Aorta (tissue), 5 donors: ENCODE measurements at regions of chr14 and their contacts with region 1.

Region 1: GRCh38 chr14:52552063-52552988 is at the starts of genes GPR137C and TXNDC16:
- DNase-seq: peak; percentile 100
- ATAC-seq: peak; percentile 99
- H3K4me3 ChIP-seq: peak within 1 kb of the TSS; percentile 58 to 76
- H3K27ac ChIP-seq: peak within 1 kb of the TSS; percentile 30 to 82
- H3K4me1 ChIP-seq: no peaks in the 10 kb centered on the region
- H3K27me3 ChIP-seq: no peaks in the 10 kb centered on the region
- total RNA-seq, gene GPR137C: 0.62 to 1.7 TPM
- total RNA-seq, gene TXNDC16: 10.2 to 10.7 TPM

Region 2: DNA sequence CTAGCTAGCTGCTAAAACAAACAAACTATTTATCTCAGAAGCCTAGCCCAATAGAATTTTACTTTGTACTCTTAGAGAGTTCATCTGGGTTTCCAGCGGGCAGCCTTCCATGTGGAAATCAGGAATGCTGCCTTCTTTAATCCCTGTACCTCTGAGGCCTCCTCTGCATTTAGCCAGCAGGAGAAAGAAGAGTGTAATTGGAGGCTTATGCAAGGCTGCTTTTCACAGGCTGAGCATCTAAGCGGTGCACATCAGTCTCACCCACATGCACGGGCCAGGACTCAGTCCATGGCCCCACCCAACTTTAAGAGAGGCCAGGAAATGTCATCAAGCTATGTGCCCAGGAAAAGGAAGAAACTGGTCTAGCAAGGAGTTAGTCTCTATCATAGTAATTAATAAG is 298.8 kb before region 1 on chr14:
- intact Hi-C with region 1: no loop called
- DNase-seq: no peak
- ATAC-seq: no peak
- H3K4me3 ChIP-seq: no peak overlapping the region
- H3K27ac ChIP-seq: no peak overlapping the region
- H3K4me1 ChIP-seq: no peaks in the 10 kb centered on the region
- H3K27me3 ChIP-seq: no peaks in the 10 kb centered on the region

Region 3: DNA sequence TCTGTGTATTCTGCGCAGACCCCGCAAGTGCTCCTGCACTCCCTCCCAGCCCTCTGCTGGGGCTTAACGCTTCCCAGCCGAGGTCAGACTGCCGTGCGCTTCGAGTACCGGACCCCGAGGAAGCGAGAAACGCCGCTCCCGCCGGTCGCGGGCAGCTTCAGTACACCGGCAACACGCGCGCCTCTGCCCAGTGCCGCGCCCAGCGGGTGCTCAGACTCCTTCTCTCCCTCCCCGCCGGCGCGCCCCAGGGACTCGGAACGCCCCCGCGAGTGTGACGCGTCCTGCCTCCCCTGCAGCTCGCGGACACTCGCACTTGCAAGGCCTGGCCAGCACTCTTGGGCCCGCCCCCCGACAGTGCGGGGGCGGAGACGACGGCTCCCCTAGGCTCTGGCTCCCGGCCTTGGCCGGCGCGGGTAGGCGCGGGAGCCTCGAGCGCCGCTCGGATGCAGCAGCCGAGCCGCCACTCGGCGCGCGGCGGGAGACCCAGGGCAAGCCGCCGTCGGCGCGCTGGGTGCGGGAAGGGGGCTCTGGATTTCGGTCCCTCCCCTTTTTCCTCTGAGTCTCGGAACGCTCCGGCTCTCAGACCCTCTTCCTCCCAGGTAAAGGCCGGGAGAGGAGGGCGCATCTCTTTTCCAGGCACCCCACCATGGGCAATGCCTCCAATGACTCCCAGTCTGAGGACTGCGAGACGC is 238.3 kb before region 1 on chr14 and contains the start of gene PTGER2:
- intact Hi-C with region 1: loop called in 1 of 2 experiments (anchors 10 kb)
- DNase-seq: peak; percentile 93 to 97
- ATAC-seq: peak; percentile 85
- H3K4me3 ChIP-seq: peak within 1 kb of the TSS; percentile 6 to 44
- H3K27ac ChIP-seq: no peak within 1 kb of the TSS
- H3K4me1 ChIP-seq: no peaks in the 10 kb centered on the region
- H3K27me3 ChIP-seq: no peaks in the 10 kb centered on the region
- total RNA-seq, gene PTGER2: 4.3 to 5.1 TPM

Region 4: DNA sequence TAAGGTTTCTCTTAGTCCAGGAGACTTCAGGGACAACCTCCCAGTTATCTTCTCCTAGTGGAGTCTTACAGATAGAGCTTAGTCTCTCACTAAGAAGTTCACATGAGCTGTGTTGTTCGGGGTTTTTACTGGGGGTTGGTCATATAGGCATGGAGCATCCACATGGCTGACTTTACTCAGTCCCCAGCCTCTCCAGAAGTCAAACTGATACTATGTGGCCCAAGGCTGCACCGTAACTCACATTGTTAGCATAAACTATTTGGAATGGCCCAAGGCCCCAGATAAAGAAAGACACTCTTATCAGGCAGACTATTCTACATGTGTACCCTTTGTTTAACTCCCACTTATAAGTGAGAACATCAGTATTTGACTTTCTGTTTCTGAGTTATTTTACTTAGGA is 23.5 kb after region 1 on chr14:
- intact Hi-C with region 1: no loop called
- DNase-seq: no peak
- ATAC-seq: no peak
- H3K4me3 ChIP-seq: no peak overlapping the region
- H3K27ac ChIP-seq: no peak overlapping the region
- H3K4me1 ChIP-seq: no peaks in the 10 kb centered on the region
- H3K27me3 ChIP-seq: no peaks in the 10 kb centered on the region

Region 5: GRCh38 chr14:52650774-52651173 is 98.4 kb after region 1 on chr14:
- intact Hi-C with region 1: no loop called
- DNase-seq: no peak
- ATAC-seq: no peak
- H3K4me3 ChIP-seq: no peak overlapping the region
- H3K27ac ChIP-seq: no peak overlapping the region
- H3K4me1 ChIP-seq: no peaks in the 10 kb centered on the region
- H3K27me3 ChIP-seq: no peaks in the 10 kb centered on the region

Region 6: DNA sequence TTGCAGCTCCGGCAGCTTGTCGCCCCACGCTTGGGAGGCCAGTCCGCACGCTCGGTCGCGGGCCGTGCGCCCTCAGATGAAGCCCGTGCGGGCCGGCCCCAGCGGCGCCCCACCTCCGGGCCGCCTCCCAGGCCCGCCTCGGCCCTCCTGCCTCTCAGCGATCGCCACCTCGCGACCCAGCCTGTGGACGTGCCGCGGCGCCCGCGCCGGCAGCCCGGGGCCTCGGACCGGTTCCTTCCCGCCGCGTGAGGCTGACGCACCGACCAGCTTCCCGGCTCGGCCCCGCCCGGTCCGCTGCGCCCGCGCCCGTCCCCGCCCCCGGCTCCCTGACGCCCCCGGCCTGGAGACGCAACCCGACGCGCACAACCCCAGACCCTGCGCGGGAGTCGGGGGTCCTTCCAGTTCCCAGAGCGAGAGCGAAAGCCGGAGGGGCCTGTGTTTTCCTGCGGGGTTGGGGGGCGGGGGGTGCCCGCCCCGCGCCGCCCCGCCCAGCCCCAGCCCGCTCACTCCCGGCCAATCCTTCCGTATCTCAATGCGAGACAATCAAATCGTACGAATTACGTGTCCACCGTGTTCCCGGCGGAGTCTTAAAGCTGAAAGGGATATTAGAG is 143.3 kb after region 1 on chr14 and contains the start of gene ERO1A:
- intact Hi-C with region 1: loop called (anchors 5 to 10 kb)
- DNase-seq: peak; percentile 93 to 94
- ATAC-seq: peak; percentile 94
- H3K4me3 ChIP-seq: peak within 1 kb of the TSS; percentile 51 to 67
- H3K27ac ChIP-seq: peak within 1 kb of the TSS; percentile 6 to 89
- H3K4me1 ChIP-seq: peaks cover 0 to 5% of the 10 kb centered on the region in 2 donors
- H3K27me3 ChIP-seq: no peaks in the 10 kb centered on the region
- total RNA-seq, gene ERO1A: 51.4 to 61.8 TPM

Region 7: GRCh38 chr14:53152890-53153701 is 600.8 kb after region 1 on chr14 and contains the start of gene DDHD1:
- intact Hi-C with region 1: loop called in 1 of 2 experiments (anchors 5 kb)
- DNase-seq: peak; percentile 86 to 91
- ATAC-seq: peak; percentile 92
- H3K4me3 ChIP-seq: peak within 1 kb of the TSS; percentile 44 to 83
- H3K27ac ChIP-seq: peak within 1 kb of the TSS; percentile 77 to 96
- H3K4me1 ChIP-seq: peaks cover 0 to 2% of the 10 kb centered on the region in 2 donors
- H3K27me3 ChIP-seq: no peaks in the 10 kb centered on the region
- total RNA-seq, gene DDHD1: 21.1 to 29.8 TPM